CD4-positive, alpha-beta T cell (primary cell): ENCODE measurements at regions of chr2 and their contacts with region 1.

Region 1: GRCh38 chr2:149587220-149587949 is at the start of gene MMADHC:
- DNase-seq: peak; percentile 86 to 97 (median 92)
- ATAC-seq: peak; percentile 94
- H3K4me3 ChIP-seq: peak within 1 kb of the TSS; percentile 84
- H3K4me3 Mint-ChIP-seq: peak within 1 kb of the TSS; percentile 96
- H3K27ac ChIP-seq: peak within 1 kb of the TSS; percentile 89 to 93
- H3K27ac Mint-ChIP-seq: peak within 1 kb of the TSS; percentile 98
- H3K4me1 ChIP-seq: peaks cover 14% of the 10 kb centered on the region
- H3K4me1 Mint-ChIP-seq: peaks cover 51% of the 10 kb centered on the region
- H3K27me3 ChIP-seq: peaks cover 0 to 16% of the 10 kb centered on the region in 2 experiments
- H3K27me3 Mint-ChIP-seq: peaks cover 23% of the 10 kb centered on the region
- CTCF ChIP-seq: no peak
- total RNA-seq, gene MMADHC: 77.3 to 77.8 TPM

Region 2: DNA sequence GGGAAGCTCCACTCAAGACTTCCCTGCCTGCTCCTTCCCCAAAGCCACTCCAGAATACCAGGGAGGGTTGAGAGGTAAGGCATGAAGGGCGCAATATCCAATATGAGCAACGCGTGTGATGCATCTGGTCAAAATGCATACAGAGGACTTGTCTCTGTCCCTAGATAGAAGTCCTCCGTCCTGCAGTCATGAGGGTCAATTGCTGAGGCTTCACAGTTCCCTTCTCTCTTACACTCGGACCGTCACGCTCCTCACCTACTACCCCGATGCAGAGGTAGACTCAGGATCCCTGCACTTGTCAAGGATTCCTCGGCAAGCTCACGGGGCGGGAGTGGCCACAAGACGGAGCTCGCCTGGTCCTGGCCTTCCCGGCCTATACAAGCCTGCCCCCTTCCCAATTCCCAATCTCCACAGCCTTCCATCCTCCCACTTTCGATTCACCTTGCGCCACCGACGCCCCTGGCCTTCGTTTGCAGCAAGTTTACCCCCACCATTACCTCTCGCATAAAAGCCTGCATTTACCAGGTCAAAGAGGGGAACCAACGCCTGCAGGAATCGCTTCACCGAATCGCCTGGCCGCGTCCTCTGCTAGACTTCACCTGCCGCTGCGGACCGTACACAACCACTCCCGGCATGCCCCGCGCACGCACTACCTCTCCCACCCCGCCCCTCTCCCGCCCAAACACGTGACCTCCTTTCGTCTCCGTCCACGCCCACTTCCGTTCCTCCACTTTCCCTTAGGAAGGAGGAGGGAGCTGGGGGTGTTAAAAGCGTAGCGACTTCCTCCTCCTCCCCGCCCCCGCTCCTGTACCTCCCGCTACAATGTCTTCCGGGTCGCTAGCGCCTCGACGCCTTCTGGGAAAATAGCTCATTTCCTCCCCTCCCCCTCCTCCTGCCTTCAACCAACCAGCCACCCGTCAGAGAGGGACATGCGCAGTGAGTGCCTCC is 1567.0 kb before region 1 on chr2 and contains the start of gene ORC4:
- CTCF ChIA-PET with region 1: no interaction called
- POLR2A ChIA-PET with region 1: interaction called, 3 read pairs
- intact Hi-C with region 1: loop called in 1 of 2 experiments (anchors 5 kb)
- DNase-seq: peak; percentile 90 to 100 (median 97)
- ATAC-seq: peak; percentile 89
- H3K4me3 ChIP-seq: peak within 1 kb of the TSS; percentile 90
- H3K4me3 Mint-ChIP-seq: peak within 1 kb of the TSS; percentile 93
- H3K27ac ChIP-seq: peak within 1 kb of the TSS; percentile 86 to 94
- H3K27ac Mint-ChIP-seq: peak within 1 kb of the TSS; percentile 87
- H3K4me1 ChIP-seq: peaks cover 17% of the 10 kb centered on the region
- H3K4me1 Mint-ChIP-seq: peaks cover 82% of the 10 kb centered on the region
- H3K27me3 ChIP-seq: no peaks in the 10 kb centered on the region
- H3K27me3 Mint-ChIP-seq: no peaks in the 10 kb centered on the region
- CTCF ChIP-seq: no peak
- total RNA-seq, gene ORC4: 29.4 to 33.9 TPM

Region 3: DNA sequence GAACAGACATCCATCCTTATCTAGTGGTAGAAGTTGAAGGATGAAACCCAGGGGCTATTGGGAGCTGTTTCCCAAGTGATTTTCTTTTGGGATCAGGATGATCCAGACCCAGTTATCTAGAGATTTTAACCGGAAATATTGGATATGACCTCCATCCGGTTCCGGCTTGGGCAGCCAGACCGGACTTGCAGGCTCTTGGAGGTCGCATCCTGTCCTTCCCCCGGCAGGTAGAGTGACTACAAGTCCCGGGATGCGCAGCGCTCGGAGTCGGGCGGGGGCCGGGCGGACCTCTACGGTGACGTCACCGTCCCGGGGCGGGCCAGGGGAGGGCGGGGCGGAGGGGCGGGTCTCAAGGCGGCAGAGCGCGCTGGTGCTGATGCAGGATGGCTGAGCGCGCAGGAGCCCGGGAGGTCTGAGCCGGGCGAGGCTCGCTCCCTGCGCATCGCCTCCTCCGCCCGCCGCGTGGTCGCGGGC is 712.5 kb before region 1 on chr2 and contains the start of gene KIF5C:
- CTCF ChIA-PET with region 1: no interaction called
- POLR2A ChIA-PET with region 1: interaction called, 3 read pairs
- intact Hi-C with region 1: loop called in 1 of 2 experiments (anchors 5 kb)
- DNase-seq: peak; percentile 78 to 95 (median 88)
- ATAC-seq: peak; percentile 90
- H3K4me3 ChIP-seq: peak within 1 kb of the TSS; percentile 70
- H3K4me3 Mint-ChIP-seq: peak within 1 kb of the TSS; percentile 92
- H3K27ac ChIP-seq: no peak within 1 kb of the TSS
- H3K27ac Mint-ChIP-seq: no peak within 1 kb of the TSS
- H3K4me1 ChIP-seq: peaks cover 24% of the 10 kb centered on the region
- H3K4me1 Mint-ChIP-seq: peaks cover 24% of the 10 kb centered on the region
- H3K27me3 ChIP-seq: peaks cover 2 to 13% of the 10 kb centered on the region in 2 experiments
- H3K27me3 Mint-ChIP-seq: peaks cover 52% of the 10 kb centered on the region
- CTCF ChIP-seq: no peak
- total RNA-seq, gene KIF5C: 7.3 to 8.1 TPM

Region 4: DNA sequence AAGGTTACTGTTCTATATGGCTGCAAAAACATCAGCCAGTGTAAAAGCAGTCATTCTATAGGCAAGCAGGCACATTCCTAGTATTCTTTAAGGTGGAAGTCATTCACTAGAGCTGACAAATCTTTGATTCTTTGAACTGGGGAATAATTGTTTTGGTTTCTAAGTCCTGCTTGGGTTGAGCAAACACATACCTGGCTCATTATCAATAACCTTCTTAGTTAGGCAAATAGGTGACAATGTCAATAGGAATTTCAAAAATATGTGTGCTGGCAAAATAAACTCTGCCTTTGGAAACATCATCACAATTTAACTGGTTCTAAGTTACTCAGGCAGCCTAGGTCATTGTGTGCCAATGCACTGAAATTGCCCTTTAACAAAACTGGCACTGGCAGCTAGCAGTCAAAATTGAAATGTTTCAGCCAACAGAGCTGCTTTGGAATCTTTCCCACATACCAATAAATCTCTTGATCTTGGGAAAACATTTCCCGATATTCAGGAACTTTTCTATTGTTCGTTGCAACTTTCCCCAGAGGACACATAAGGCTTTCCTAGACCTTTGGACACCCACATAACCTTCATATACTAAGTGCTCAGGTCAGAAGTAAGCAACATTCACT is 402.2 kb after region 1 on chr2:
- CTCF ChIA-PET with region 1: no interaction called
- POLR2A ChIA-PET with region 1: no interaction called
- intact Hi-C with region 1: no loop called
- DNase-seq: no peak
- ATAC-seq: no peak
- H3K4me3 ChIP-seq: no peak overlapping the region
- H3K4me3 Mint-ChIP-seq: no peak overlapping the region
- H3K27ac ChIP-seq: no peak overlapping the region
- H3K27ac Mint-ChIP-seq: no peak overlapping the region
- H3K4me1 ChIP-seq: no peaks in the 10 kb centered on the region
- H3K4me1 Mint-ChIP-seq: no peaks in the 10 kb centered on the region
- H3K27me3 ChIP-seq: no peaks in the 10 kb centered on the region
- H3K27me3 Mint-ChIP-seq: no peaks in the 10 kb centered on the region
- CTCF ChIP-seq: no peak

Region 5: GRCh38 chr2:151261231-151261976 is 1674.0 kb after region 1 on chr2 and contains the start of gene RBM43:
- CTCF ChIA-PET with region 1: no interaction called
- POLR2A ChIA-PET with region 1: interaction called, 29 read pairs
- intact Hi-C with region 1: no loop called
- DNase-seq: peak; percentile 64 to 94 (median 78)
- ATAC-seq: peak; percentile 88
- H3K4me3 ChIP-seq: peak within 1 kb of the TSS; percentile 96
- H3K4me3 Mint-ChIP-seq: peak within 1 kb of the TSS; percentile 97
- H3K27ac ChIP-seq: peak within 1 kb of the TSS; percentile 96 to 98
- H3K27ac Mint-ChIP-seq: peak within 1 kb of the TSS; percentile 96
- H3K4me1 ChIP-seq: peaks cover 22% of the 10 kb centered on the region
- H3K4me1 Mint-ChIP-seq: peaks cover 39% of the 10 kb centered on the region
- H3K27me3 ChIP-seq: no peaks in the 10 kb centered on the region
- H3K27me3 Mint-ChIP-seq: no peaks in the 10 kb centered on the region
- CTCF ChIP-seq: no peak
- total RNA-seq, gene RBM43: 15.0 to 16.0 TPM

Region 6: GRCh38 chr2:151289369-151290088 is 1702.1 kb after region 1 on chr2 and contains the start of gene NMI:
- CTCF ChIA-PET with region 1: no interaction called
- POLR2A ChIA-PET with region 1: interaction called, 21 read pairs
- intact Hi-C with region 1: loop called in 1 of 2 experiments (anchors 5 kb)
- DNase-seq: peak; percentile 42 to 89 (median 61)
- ATAC-seq: peak; percentile 71
- H3K4me3 ChIP-seq: peak within 1 kb of the TSS; percentile 82
- H3K4me3 Mint-ChIP-seq: peak within 1 kb of the TSS; percentile 94
- H3K27ac ChIP-seq: peak within 1 kb of the TSS; percentile 82 to 97
- H3K27ac Mint-ChIP-seq: peak within 1 kb of the TSS; percentile 96
- H3K4me1 ChIP-seq: peaks cover 23% of the 10 kb centered on the region
- H3K4me1 Mint-ChIP-seq: peaks cover 56% of the 10 kb centered on the region
- H3K27me3 ChIP-seq: no peaks in the 10 kb centered on the region
- H3K27me3 Mint-ChIP-seq: no peaks in the 10 kb centered on the region
- CTCF ChIP-seq: no peak
- total RNA-seq, gene NMI: 23.5 to 24.2 TPM